ENCODE measurements at regions of chr9 and their contacts with region 1.

Region 1: DNA sequence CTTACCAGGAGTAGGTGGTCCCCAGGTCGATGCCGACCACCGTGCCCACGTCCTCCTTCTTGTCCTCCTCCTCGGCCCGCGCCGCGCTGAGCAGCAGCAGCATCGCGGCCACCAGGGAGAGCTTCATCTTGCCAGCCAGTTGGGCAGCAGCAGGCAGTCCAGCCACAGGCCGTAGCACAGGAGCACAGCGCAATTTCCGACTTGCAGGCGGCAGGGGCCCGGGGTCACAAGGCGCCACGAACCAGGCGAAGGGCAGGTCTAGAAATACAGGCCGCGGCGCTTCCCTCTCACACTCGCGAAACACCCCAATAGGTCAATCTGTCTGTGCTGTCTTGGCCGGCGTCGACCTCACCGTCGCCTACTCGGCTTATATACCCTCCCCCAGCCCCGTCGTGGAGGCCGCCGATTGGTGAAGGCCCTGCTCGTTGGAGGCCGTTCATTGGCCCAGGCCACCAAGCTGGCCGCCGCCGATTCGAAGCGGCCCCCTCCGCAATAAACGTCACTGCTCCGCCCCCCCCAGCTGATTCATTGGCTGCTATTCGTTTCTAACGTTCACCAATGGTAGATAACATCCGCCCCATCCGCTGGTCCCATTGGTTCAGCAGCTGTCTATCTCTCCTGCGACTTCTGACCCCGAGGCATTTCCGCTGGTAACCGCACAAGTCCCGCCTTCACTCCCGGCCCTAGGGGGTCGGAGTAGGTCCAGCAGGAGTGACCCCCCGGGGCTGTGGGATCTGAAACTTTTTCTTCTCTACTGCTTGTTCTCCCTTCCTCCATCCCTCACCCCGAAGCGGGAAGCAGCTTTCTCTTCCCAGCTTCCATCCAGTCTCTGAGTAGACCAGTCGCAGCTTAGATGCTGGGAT is at the start of gene HSPA5:
- DNase-seq: peak; percentile 100
- H3K4me3 Mint-ChIP-seq: peak within 1 kb of the TSS; percentile 79
- H3K27ac Mint-ChIP-seq: peak within 1 kb of the TSS; percentile 90
- H3K4me1 Mint-ChIP-seq: peaks cover 27% of the 10 kb centered on the region
- H3K27me3 Mint-ChIP-seq: no peaks in the 10 kb centered on the region
- CTCF ChIP-seq: no peak
- total RNA-seq, gene HSPA5: 1,165 and 1,788 TPM in 2 replicates

Region 2: DNA sequence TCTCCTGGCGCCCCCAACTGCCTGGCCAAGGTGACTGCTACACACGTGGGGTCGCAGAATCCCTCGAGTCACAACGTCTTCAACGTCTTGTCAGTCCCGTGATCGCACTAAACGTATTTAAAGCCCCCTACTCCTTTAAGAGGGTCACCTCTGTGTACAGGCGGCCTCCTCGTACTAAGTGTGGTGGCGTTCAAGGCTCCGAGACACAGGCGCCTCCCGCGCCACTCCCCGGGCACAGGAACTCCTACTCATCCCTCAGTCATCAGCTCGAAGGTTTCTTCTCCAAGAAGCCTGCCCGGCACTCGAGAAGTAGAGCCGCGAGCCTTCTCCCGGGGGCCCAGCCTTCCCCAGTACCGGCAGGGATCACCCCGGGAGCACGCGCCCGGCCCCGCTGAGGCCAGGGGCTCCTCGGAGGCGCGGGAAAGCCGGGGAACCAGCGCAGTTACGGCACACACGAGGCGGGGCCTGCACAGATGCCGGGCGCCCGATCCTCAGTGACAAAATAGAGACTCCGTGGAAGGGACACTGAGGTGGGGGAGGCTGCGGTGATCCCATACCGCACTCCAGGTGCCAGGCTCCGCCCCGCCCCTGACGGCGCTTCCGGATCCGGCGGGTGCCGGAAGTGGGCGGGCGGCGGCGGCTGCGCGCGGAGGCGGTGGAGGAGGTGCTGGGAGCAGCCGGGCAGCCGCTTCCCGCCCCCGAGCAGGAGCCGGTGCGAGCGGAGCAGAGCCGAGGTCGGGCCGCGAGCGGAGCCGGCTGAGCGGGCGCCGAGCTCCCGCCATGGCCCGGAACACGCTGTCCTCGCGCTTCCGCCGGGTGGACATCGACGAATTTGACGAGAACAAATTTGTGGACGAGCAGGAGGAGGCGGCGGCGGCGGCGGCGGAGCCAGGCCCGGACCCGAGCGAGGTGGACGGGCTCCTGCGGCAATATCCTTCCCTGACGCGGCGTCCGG is 372.4 kb before region 1 on chr9:
- CTCF ChIA-PET with region 1: no interaction called
- POLR2A ChIA-PET with region 1: interaction called, 11 read pairs
- intact Hi-C with region 1: no loop called
- DNase-seq: peak; percentile 86
- H3K4me3 Mint-ChIP-seq: peak overlapping the region; percentile 95
- H3K27ac Mint-ChIP-seq: peak overlapping the region; percentile 97
- H3K4me1 Mint-ChIP-seq: peaks cover 33% of the 10 kb centered on the region
- H3K27me3 Mint-ChIP-seq: no peaks in the 10 kb centered on the region
- CTCF ChIP-seq: no peak

Region 3: GRCh38 chr9:125200210-125201047 is 40.8 kb before region 1 on chr9 and contains the start of gene RABEPK:
- CTCF ChIA-PET with region 1: interaction called, 6 read pairs
- POLR2A ChIA-PET with region 1: interaction called, 138 read pairs
- intact Hi-C with region 1: no loop called
- DNase-seq: peak; percentile 95
- H3K4me3 Mint-ChIP-seq: peak within 1 kb of the TSS; percentile 95
- H3K27ac Mint-ChIP-seq: peak within 1 kb of the TSS; percentile 92
- H3K4me1 Mint-ChIP-seq: peaks cover 7% of the 10 kb centered on the region
- H3K27me3 Mint-ChIP-seq: no peaks in the 10 kb centered on the region
- CTCF ChIP-seq: no peak
- total RNA-seq, gene RABEPK: 21.5 and 37.2 TPM in 2 replicates

Region 4: GRCh38 chr9:125261501-125262293 is 20.5 kb after region 1 on chr9 and contains the start of gene GAPVD1:
- CTCF ChIA-PET with region 1: interaction called, 14 read pairs
- POLR2A ChIA-PET with region 1: interaction called, 83 read pairs
- intact Hi-C with region 1: no loop called
- DNase-seq: peak; percentile 88
- H3K4me3 Mint-ChIP-seq: peak within 1 kb of the TSS; percentile 83
- H3K27ac Mint-ChIP-seq: peak within 1 kb of the TSS; percentile 92
- H3K4me1 Mint-ChIP-seq: peaks cover 30% of the 10 kb centered on the region
- H3K27me3 Mint-ChIP-seq: no peaks in the 10 kb centered on the region
- CTCF ChIP-seq: peak; percentile 27
- total RNA-seq, gene GAPVD1: 46.2 and 53.9 TPM in 2 replicates

Region 5: DNA sequence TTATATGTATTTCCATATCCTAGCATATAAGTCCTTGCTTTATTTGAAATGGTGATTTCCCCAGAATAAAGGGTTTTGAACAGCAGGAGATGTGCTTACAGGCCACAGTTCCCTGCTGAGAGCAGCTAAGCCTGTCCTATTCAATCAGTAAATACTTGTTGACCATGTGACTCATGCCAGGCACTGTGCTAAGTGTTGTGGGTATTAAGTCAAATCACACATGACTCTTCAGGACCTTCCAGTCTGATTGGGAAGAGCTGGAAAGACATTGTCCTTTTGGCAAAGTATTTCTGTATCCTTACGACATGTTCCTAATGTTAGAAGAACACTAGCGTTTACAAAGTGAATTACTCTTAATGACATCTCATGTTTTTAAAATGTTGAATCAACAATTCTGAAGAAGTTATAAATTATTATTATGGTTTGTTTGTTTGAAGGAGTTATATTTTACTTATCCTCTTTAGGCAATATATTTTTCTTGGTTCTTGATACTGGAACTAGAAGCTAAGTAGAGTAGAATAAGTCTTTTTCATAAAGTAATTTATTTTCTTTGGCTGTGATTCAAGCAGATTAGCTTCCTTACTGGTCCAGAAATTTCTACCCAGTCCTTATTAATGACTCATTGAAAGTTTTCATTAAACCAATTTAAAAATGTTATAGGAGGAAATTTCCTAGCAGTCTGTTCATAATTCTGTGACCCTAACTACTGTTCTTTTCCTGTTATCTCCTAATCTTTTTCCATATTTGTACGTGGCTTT is 102.5 kb after region 1 on chr9:
- CTCF ChIA-PET with region 1: no interaction called
- POLR2A ChIA-PET with region 1: interaction called, 27 read pairs
- intact Hi-C with region 1: no loop called
- DNase-seq: peak; percentile 50
- H3K4me3 Mint-ChIP-seq: no peak overlapping the region
- H3K27ac Mint-ChIP-seq: no peak overlapping the region
- H3K4me1 Mint-ChIP-seq: no peaks in the 10 kb centered on the region
- H3K27me3 Mint-ChIP-seq: no peaks in the 10 kb centered on the region
- CTCF ChIP-seq: no peak